ENCODE measurements at regions of chr11 and their contacts with region 1.

Region 1: GRCh38 chr11:122668562-122669090 is 13.1 kb downstream of the UBASH3B start:
- DNase-seq: no peak
- H3K4me3 Mint-ChIP-seq: no peak overlapping the region
- H3K27ac Mint-ChIP-seq: peak overlapping the region; percentile 79
- H3K4me1 Mint-ChIP-seq: peaks cover 26% of the 10 kb centered on the region
- H3K27me3 Mint-ChIP-seq: peaks cover 17% of the 10 kb centered on the region

Region 2: GRCh38 chr11:122633219-122633829 is 35.3 kb before region 1 on chr11:
- intact Hi-C with region 1: no loop called
- DNase-seq: no peak
- H3K4me3 Mint-ChIP-seq: no peak overlapping the region
- H3K27ac Mint-ChIP-seq: no peak overlapping the region
- H3K4me1 Mint-ChIP-seq: peaks cover 10% of the 10 kb centered on the region
- H3K27me3 Mint-ChIP-seq: peaks cover 10% of the 10 kb centered on the region

Region 3: GRCh38 chr11:122727101-122727929 is 58.7 kb after region 1 on chr11:
- intact Hi-C with region 1: loop called (anchors 2 kb)
- DNase-seq: peak; percentile 19
- H3K4me3 Mint-ChIP-seq: peak overlapping the region; percentile 67
- H3K27ac Mint-ChIP-seq: peak overlapping the region; percentile 87
- H3K4me1 Mint-ChIP-seq: peaks cover 46% of the 10 kb centered on the region
- H3K27me3 Mint-ChIP-seq: peaks cover 3% of the 10 kb centered on the region